GM12878 (cell line): ENCODE measurements at regions of chr1 and their contacts with region 1.

Region 1: GRCh38 chr1:21368515-21369289 is 71.2 kb upstream of the NBPF3 start:
- DNase-seq: no peak
- ATAC-seq: peak; percentile 86
- H3K4me3 ChIP-seq: no peak overlapping the region
- H3K27ac ChIP-seq: no peak overlapping the region
- H3K4me1 ChIP-seq: no peaks in the 10 kb centered on the region; the same call in 1 of the 2 replicates
- H3K27me3 ChIP-seq: no peaks in the 10 kb centered on the region
- CTCF ChIP-seq: peak; percentile 98 to 100 (median 99); a peak in 5 of 6 replicates
- EP300 ChIP-seq: no peak
- POLR2A ChIP-seq: no peak
- RAD21 ChIP-seq: peak; percentile 100

Region 2: DNA sequence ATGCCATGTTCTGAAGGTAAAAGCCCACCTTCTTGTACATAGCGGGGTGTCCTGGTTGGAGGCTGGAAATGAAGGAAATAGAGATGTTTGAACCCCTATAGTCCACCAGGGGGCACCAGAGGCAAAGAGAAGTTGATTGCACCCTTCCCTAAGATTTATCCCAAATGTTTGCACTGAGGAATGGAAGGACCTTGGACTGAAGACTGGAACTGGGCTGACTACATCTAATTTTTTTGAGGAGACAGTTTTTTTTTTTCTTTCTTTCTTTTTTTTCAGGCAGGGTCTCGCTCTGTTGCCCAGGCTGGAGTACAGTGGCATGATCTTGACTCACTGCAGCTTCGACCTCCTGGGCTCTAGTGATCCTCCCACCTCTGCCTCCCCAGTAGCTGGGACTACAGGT is 136.7 kb before region 1 on chr1:
- CTCF ChIA-PET with region 1: interaction called, 171 read pairs
- POLR2A ChIA-PET with region 1: interaction called, 7 read pairs
- RAD21 ChIA-PET with region 1: interaction called, 48 read pairs
- SMC1A ChIA-PET with region 1: interaction called, 38 read pairs
- in situ Hi-C with region 1: loop called (anchors 5 kb)
- intact Hi-C with region 1: loop called (anchors 1 kb)
- DNase-seq: no peak
- ATAC-seq: peak; percentile 77
- H3K4me3 ChIP-seq: no peak overlapping the region
- H3K27ac ChIP-seq: no peak overlapping the region
- H3K4me1 ChIP-seq: no peaks in the 10 kb centered on the region
- H3K27me3 ChIP-seq: no peaks in the 10 kb centered on the region
- CTCF ChIP-seq: peak; percentile 59 to 75 (median 73)
- EP300 ChIP-seq: no peak
- POLR2A ChIP-seq: no peak
- RAD21 ChIP-seq: peak; percentile 82

Region 3: GRCh38 chr1:21270086-21270689 is 98.5 kb before region 1 on chr1:
- CTCF ChIA-PET with region 1: interaction called, 101 read pairs
- POLR2A ChIA-PET with region 1: interaction called, 3 read pairs
- RAD21 ChIA-PET with region 1: interaction called, 30 read pairs
- SMC1A ChIA-PET with region 1: interaction called, 30 read pairs
- in situ Hi-C with region 1: no loop called
- intact Hi-C with region 1: no loop called
- DNase-seq: peak; percentile 13
- ATAC-seq: peak; percentile 97
- H3K4me3 ChIP-seq: no peak overlapping the region
- H3K27ac ChIP-seq: no peak overlapping the region
- H3K4me1 ChIP-seq: no peaks in the 10 kb centered on the region
- H3K27me3 ChIP-seq: no peaks in the 10 kb centered on the region
- CTCF ChIP-seq: peak; percentile 93 to 99 (median 95)
- EP300 ChIP-seq: no peak
- POLR2A ChIP-seq: no peak
- RAD21 ChIP-seq: peak; percentile 58

Region 4: DNA sequence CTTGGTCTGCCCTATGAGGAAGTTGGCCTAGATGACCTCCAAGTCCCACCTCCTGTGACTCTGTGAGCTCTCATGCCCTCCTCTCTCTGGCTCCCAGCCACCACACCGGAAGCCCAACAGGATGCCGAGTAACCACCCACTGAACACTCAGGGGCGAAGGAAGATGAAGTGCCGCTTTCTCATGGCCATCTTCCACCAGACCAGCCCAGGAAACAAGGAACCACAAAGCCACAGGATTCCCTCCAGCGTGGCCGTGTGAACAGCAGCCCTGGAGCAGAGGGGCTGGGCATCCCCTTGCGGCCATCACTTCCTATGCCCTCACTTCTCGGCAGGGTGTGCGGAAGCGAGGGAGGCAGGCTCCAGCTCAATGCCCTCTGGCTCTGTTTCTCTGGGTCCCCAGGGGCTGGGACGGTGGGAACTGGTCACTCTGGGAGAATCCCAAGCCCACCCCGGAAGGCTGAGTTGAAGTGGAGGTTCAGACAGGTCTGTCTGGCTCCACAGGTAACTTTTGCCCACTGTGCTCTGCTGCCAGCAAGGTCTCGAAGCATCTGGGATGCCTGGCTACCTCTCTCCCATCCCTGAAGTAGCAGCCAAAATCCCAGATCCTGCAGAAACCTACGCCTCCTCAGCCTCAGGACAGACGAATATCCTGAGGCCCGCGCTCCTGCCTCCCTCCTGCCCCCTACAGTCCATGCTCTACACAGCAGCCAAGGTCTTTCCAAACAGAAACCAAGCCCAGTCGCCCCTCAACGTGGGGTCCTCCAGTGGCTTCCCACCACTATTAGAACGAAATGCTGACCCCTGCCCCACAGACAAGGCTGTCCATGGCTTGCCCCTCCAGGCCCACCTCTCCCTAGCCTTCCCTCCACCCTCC is 34.3 kb before region 1 on chr1:
- CTCF ChIA-PET with region 1: interaction called, 23 read pairs
- POLR2A ChIA-PET with region 1: no interaction called
- RAD21 ChIA-PET with region 1: interaction called, 8 read pairs
- SMC1A ChIA-PET with region 1: interaction called, 14 read pairs
- in situ Hi-C with region 1: no loop called
- intact Hi-C with region 1: no loop called
- DNase-seq: peak; percentile 91
- ATAC-seq: peak; percentile 92
- H3K4me3 ChIP-seq: peak overlapping the region; percentile 55; the same call in 1 of the 2 replicates
- H3K27ac ChIP-seq: peak overlapping the region; percentile 87
- H3K4me1 ChIP-seq: peaks cover 46% of the 10 kb centered on the region
- H3K27me3 ChIP-seq: no peaks in the 10 kb centered on the region
- CTCF ChIP-seq: peak; percentile 72 to 87 (median 76)
- EP300 ChIP-seq: peak in 1 of 2 experiments; percentile 11; a peak in 1 of 4 replicates
- POLR2A ChIP-seq: peak; percentile 56
- RAD21 ChIP-seq: peak; percentile 63

Region 5: DNA sequence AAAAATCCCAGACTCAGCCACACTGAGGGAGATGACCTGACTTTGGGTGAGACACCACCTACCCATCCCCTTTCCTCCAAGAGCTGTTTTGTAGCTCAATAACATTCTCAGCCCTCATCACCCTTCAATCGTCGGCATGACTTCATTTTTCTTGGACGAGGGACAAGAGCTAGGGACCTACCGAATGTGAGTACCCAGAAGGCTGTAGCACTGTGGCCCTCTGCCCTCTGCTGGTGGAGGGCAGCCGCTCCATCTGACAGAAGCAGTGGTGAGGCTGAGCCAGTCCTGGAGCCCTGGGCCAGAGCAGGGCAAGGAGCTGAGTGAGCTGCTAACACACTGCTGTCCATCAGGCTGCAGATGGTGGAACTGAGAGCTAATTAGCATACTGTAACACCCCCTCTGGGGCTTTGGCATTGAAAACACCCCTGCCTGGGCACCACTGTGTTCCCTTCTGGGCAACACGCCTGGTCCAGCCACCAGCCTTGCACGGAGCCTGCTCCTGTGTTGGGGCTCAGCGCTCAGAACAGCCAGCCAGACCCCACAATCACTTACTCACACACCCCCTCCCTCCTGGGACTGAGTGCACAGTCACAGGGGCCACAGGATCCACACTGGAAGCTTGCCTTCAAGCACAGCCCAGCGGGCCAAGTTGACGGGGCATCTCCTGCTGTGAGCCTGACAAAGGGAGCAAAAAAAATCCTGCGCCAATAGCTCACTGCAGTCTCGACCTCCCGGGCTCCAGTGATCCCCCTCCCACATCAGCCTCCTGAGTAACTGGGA is 122.3 kb after region 1 on chr1:
- CTCF ChIA-PET with region 1: interaction called, 34 read pairs
- POLR2A ChIA-PET with region 1: no interaction called
- RAD21 ChIA-PET with region 1: interaction called, 6 read pairs
- SMC1A ChIA-PET with region 1: interaction called, 3 read pairs
- in situ Hi-C with region 1: no loop called
- intact Hi-C with region 1: loop called (anchors 5 kb)
- DNase-seq: no peak
- ATAC-seq: peak; percentile 88
- H3K4me3 ChIP-seq: no peak overlapping the region
- H3K27ac ChIP-seq: no peak overlapping the region
- H3K4me1 ChIP-seq: peaks cover 3% of the 10 kb centered on the region
- H3K27me3 ChIP-seq: no peaks in the 10 kb centered on the region; a peak in 1 of 4 replicates
- CTCF ChIP-seq: peak; percentile 41 to 66 (median 49); a peak in 5 of 6 replicates
- EP300 ChIP-seq: no peak
- POLR2A ChIP-seq: no peak
- RAD21 ChIP-seq: peak; percentile 32; the same call in 1 of the 2 replicates

Region 6: DNA sequence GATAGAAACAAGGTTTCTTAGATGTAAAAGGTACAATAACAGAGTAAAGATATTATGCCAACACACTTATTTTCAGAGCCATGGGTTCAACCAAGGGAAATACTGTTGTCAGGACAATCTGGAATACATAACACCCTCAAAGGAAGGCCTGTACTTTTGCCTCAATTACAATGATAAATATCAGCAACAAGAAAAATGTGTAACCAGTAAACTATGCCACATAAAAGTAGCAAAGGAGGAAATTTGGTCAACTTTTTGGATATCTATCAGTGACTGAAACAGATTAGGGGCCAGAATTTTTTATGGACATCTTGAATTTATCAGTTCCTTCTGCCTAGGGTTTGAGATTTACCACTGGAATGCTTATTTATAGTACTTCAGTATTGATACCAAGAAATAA is 325.0 kb after region 1 on chr1:
- CTCF ChIA-PET with region 1: no interaction called
- POLR2A ChIA-PET with region 1: no interaction called
- RAD21 ChIA-PET with region 1: no interaction called
- SMC1A ChIA-PET with region 1: no interaction called
- in situ Hi-C with region 1: no loop called
- intact Hi-C with region 1: no loop called
- DNase-seq: no peak
- ATAC-seq: no peak
- H3K4me3 ChIP-seq: no peak overlapping the region
- H3K27ac ChIP-seq: no peak overlapping the region
- H3K4me1 ChIP-seq: no peaks in the 10 kb centered on the region
- H3K27me3 ChIP-seq: no peaks in the 10 kb centered on the region
- CTCF ChIP-seq: no peak
- EP300 ChIP-seq: no peak
- POLR2A ChIP-seq: no peak
- RAD21 ChIP-seq: no peak